ENCODE measurements at regions of chr9 and their contacts with region 1.

Region 1: DNA sequence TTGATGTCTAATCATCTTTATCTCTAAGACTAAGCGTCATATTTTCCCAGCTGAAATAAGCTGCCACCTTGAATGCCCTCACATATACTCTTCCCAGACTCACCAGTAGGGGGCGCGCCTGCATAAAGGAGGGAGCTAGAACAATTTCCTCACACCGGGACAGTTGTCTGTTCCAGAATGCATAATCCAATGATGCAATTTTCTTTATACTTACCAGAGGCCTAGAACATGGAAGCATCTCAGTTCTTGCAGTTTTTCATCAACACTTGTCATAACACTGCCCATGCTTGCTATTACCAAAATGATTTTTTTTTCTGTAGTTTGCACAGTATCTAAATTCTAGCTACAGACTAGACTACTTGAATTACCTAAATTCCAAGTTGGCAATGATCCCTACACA is 203.9 kb downstream of the FRMD3 start:
- DNase-seq: peak; percentile 18 to 91
- H3K4me3 ChIP-seq: no peak overlapping the region
- H3K27ac ChIP-seq: no peak overlapping the region
- H3K4me1 ChIP-seq: peaks cover 0 to 4% of the 10 kb centered on the region in 2 donors
- H3K27me3 ChIP-seq: no peaks in the 10 kb centered on the region
- CTCF ChIP-seq: peak; percentile 80 to 94 (median 82)

Region 2: GRCh38 chr9:83144492-83144891 is 189.8 kb before region 1 on chr9:
- intact Hi-C with region 1: no loop called
- DNase-seq: no peak
- H3K4me3 ChIP-seq: no peak overlapping the region
- H3K27ac ChIP-seq: no peak overlapping the region
- H3K4me1 ChIP-seq: no peaks in the 10 kb centered on the region
- H3K27me3 ChIP-seq: no peaks in the 10 kb centered on the region
- CTCF ChIP-seq: no peak

Region 3: DNA sequence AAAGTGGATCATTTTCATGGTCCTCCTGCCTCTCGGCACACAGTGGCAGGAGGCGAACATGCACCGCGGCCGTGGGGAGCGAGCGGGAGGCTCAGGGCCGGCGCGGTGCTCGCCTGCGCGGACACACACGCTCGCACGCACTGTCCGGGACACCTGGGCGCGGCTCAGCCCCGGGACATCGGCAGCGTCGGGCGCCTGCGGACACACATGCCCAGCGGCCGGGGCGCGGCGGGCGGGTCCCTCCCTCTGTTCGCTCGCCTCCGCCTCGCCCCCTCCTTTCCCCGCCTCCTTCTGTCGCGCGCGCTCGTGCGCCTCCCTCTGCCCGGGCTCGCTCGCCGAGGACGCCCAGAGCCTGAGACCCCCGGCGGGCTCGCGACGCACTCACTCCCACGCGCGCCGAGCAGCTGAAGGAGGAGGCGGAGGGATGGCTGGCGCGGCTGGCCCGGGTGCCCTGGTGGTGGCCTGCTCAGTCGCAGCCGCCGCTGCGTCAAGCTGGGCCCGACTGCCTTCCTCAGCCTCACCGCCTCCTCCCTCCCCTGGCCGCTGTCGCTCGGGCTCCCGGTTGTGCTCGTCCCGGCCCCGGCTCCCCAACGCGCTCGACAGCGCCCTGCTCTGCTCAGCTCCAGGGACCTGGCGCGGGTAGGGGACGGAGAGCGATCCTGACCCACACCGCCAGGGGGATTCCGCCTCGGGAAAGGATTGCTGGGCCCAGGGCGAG is 204.0 kb after region 1 on chr9 and contains the start of gene FRMD3:
- intact Hi-C with region 1: loop called (anchors 1 kb)
- DNase-seq: peak; percentile 30 to 89
- H3K4me3 ChIP-seq: peak within 1 kb of the TSS; percentile 72 to 83
- H3K27ac ChIP-seq: peak within 1 kb of the TSS; percentile 49 to 65
- H3K4me1 ChIP-seq: peaks cover 0 to 8% of the 10 kb centered on the region in 2 donors
- H3K27me3 ChIP-seq: no peaks in the 10 kb centered on the region
- CTCF ChIP-seq: peak; percentile 63 to 73 (median 68)
- total RNA-seq, gene FRMD3: 8.5 TPM

Region 4: DNA sequence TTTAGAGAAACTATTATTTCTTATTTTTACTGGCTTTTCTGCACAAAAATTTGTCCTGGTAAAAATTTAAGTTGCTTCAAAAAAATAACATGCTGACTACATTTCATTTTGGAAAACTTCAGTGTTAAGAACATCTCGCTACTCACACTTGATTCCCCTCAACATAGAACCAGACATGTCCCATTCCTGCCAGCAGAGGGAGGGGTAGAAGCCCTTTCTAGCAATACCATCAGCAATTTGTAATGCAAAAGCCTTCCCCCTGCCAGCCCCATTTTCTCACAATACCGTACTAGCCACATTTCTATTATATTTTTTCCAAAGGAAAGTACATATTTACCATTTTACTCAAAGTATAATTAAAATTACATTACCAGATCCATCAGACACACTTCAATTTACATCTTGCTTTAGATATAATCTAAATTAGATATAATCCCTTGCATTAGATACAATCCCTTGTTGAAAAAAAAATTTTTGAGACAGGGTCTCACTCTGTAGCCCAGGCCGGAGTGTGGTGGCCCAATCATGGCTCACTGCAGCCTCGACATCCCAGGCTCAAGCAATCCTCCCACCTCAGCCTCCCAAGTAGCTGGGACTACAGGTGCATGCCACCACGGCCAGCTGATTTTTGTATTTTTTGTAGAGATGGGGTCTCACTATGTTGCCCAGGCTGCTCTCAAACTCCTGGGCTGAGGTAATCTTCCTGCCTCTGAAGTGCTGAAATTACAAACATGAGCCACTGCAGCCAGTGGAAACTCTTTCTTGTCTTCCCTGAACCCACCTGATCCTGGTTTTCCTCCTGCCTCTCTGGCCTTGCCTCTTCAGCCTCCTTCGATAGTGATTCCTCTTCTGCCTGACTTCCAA is 249.1 kb after region 1 on chr9:
- intact Hi-C with region 1: loop called (anchors 5 kb)
- DNase-seq: peak in 1 of 2 donors; percentile 85
- H3K4me3 ChIP-seq: no peak overlapping the region
- H3K27ac ChIP-seq: peak overlapping the region in 1 of 2 donors; percentile 29
- H3K4me1 ChIP-seq: peaks cover 0 to 8% of the 10 kb centered on the region in 2 donors
- H3K27me3 ChIP-seq: no peaks in the 10 kb centered on the region
- CTCF ChIP-seq: peak; percentile 61 to 73 (median 69)

Region 5: DNA sequence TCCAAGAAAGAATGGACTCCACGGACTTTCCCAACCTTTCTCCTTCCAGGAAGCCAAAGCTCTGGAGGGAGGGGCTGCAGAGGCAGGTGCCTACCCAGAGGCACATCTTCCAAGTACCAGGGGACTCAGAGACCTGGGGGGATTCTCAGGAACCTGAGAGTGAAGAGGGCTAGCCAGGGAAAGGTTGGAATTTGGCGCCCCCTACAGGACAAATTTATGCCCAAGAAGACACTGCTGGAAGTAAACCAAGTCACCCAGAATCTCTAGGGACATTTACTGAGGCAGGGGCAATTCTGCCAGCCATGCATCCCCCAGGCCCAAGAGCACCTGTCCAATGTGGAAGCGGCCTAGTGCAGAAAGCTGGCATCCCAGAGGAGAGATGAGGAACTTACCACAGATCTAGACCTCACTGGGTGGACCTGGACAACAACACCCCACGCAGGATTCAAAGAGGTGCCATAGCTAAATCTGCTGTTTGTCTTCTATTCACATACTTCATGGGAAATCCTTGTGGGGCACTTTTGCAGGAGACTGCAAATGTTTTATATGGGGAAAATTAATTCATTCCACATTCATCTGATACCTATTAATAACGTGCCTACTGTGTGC is 262.7 kb after region 1 on chr9:
- intact Hi-C with region 1: loop called (anchors 1 kb)
- DNase-seq: no peak
- H3K4me3 ChIP-seq: no peak overlapping the region
- H3K27ac ChIP-seq: no peak overlapping the region
- H3K4me1 ChIP-seq: no peaks in the 10 kb centered on the region
- H3K27me3 ChIP-seq: no peaks in the 10 kb centered on the region
- CTCF ChIP-seq: peak; percentile 6 to 63 (median 57)

Region 6: GRCh38 chr9:83707768-83708514 is 373.6 kb after region 1 on chr9 and contains the start of gene UBQLN1:
- intact Hi-C with region 1: loop called (anchors 10 kb)
- DNase-seq: peak; percentile 72 to 95
- H3K4me3 ChIP-seq: peak within 1 kb of the TSS; percentile 88 to 96
- H3K27ac ChIP-seq: peak within 1 kb of the TSS; percentile 98 to 99
- H3K4me1 ChIP-seq: no peaks in the 10 kb centered on the region
- H3K27me3 ChIP-seq: no peaks in the 10 kb centered on the region
- CTCF ChIP-seq: no peak
- total RNA-seq, gene UBQLN1: 118 TPM

Region 7: DNA sequence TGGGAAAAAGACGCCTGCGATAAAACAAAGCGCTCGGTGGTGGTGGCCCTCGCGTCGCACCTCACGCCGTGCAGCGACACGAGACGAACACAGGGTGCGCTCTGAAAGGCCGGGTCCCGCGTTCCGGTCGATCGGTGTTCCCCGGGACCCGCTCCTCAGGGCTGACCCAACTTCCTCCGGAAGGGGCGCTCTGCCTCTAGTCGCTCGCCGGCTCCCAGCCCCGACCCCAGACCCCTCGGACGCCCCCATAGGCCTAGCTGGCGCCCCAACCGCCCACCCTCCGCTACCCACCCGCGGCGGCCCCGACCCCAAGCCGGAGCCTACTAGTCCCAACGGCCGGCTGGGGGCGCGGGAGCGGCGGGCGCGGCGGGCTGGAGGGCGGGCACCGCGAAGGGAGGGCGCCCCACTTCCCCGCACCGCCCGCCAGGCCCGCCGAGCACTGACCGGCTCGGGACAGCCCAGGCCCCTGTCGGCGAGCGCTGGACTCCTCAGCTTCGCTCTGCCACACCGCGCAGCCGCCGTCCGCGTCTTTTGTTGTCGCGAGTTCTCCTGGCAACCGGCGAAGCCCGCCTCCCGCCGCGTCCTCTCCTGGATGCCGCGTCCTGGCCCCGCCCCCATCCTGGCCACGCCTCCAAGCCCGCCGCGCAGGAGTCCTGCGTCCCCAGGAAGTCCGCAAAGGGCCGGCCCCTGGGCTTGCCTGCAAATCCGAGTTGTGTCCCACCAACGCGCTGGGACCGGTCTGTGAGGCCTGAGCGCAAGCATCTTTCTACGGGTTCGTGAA is 586.8 kb after region 1 on chr9 and contains the start of gene KIF27:
- intact Hi-C with region 1: loop called (anchors 10 kb)
- DNase-seq: peak; percentile 95 to 99
- H3K4me3 ChIP-seq: peak within 1 kb of the TSS; percentile 93 to 99
- H3K27ac ChIP-seq: peak within 1 kb of the TSS; percentile 95 to 99
- H3K4me1 ChIP-seq: no peaks in the 10 kb centered on the region
- H3K27me3 ChIP-seq: no peaks in the 10 kb centered on the region
- CTCF ChIP-seq: peak in 2 of 3 experiments; percentile 41 to 67
- total RNA-seq, gene KIF27: 1.9 TPM